Spleen (tissue), 13 donors: ENCODE measurements at regions of chr11 and their contacts with region 1.

Region 1: GRCh38 chr11:117941163-117941707 is 12.0 kb upstream of the TMPRSS13 start:
- DNase-seq: peak; percentile 46
- H3K4me3 ChIP-seq: no peak overlapping the region
- H3K27ac ChIP-seq: no peak overlapping the region
- H3K4me1 ChIP-seq: peaks cover 0 to 16% (median 10%) of the 10 kb centered on the region in 6 donors
- H3K27me3 ChIP-seq: no peaks in the 10 kb centered on the region
- CTCF ChIP-seq: no peak
- POLR2A ChIP-seq: no peak

Region 2: DNA sequence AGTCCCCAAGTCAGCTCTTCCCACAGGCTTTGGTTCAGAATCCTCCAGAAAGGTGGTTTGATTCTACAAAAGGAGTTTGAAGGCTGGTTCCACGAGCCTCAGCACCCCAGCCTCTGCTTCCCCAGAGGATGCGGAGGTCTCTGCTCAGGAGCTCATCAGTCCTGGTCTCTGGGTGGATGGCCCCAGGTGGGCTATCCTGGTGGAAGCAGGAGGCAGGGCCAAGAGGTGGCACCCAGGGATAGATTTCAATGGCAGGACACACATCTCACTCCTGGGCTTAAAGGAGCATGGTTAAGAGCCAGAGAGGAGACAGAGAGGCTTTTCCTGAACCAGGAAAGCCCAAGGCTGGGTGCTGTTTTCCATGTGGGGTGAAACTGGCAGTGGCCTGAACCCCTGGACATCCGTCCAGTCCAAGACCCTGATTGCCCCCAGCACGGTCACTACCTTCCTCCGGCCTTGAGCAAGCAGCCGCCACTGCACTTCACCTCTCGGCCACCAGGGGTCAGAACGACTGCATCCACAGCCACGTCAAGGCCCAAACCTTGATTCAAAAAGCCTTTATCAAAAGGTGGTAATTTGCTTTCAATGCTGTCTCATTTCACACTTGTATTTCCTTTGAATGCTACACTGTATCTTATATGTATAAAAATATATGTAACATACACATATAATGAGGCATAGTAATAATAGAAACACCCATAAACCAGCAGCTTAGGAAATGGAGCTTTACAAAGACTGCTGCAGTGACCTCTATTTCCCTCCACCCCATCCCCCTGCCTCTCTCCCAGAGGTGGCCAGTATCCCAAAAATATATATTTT is 97.4 kb before region 1 on chr11:
- intact Hi-C with region 1: loop called (anchors 5 kb)
- DNase-seq: peak; percentile 94
- H3K4me3 ChIP-seq: no peak overlapping the region
- H3K27ac ChIP-seq: peak overlapping the region in 7 of 8 donors; percentile 0 to 66 (median 46)
- H3K4me1 ChIP-seq: peaks cover 4 to 43% (median 22%) of the 10 kb centered on the region in 6 donors
- H3K27me3 ChIP-seq: no peaks in the 10 kb centered on the region
- CTCF ChIP-seq: peak; percentile 98 to 99 (median 99)
- POLR2A ChIP-seq: no peak